ENCODE measurements at regions of chr3 and their contacts with region 1.

Region 1: GRCh38 chr3:123028233-123028828 is 768 bp upstream of the SEMA5B start:
- DNase-seq: peak in 1 of 2 donors; percentile 46
- ATAC-seq: peak; percentile 7 to 62 (median 50)
- H3K4me3 ChIP-seq: peak overlapping the region; percentile 40 to 82 (median 68)
- H3K27ac ChIP-seq: peak overlapping the region in 7 of 10 donors; percentile 8 to 75 (median 53)
- H3K4me1 ChIP-seq: peaks cover 9 to 47% (median 30%) of the 10 kb centered on the region in 9 donors
- H3K27me3 ChIP-seq: peaks cover 0 to 82% (median 17%) of the 10 kb centered on the region in 7 donors
- CTCF ChIP-seq: peak; percentile 29 to 71 (median 55)

Region 2: GRCh38 chr3:122858373-122858772 is 170.0 kb before region 1 on chr3:
- intact Hi-C with region 1: loop called in 4 of 10 experiments (anchors 2 to 10 kb)
- DNase-seq: no peak
- ATAC-seq: no peak
- H3K4me3 ChIP-seq: no peak overlapping the region
- H3K27ac ChIP-seq: no peak overlapping the region
- H3K4me1 ChIP-seq: peaks cover 0 to 3% (median 0%) of the 10 kb centered on the region in 9 donors
- H3K27me3 ChIP-seq: no peaks in the 10 kb centered on the region
- CTCF ChIP-seq: peak in 7 of 9 donors; percentile 16 to 59 (median 50)

Region 3: DNA sequence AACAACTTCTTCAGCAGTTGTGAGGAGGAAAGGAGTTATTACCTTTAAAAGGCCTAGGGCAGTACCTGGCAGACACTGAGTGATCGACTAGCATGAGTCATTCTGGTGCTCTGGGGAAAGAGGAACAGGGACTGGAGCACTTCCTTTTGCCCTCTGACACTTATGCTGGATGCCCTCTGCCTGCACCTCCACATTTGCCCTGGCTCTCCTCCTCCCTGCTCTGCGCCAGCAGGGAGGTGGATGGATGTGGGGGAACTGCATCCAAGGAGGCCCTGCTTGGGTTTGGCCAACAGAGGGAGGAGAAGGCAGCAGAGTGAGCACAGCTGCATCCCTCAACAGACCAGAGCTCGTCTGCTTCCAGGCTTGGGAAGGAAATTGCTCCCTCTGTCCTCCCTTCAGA is 75.8 kb before region 1 on chr3:
- intact Hi-C with region 1: loop called in 3 of 10 experiments (anchors 2 to 5 kb)
- DNase-seq: peak in 1 of 2 donors; percentile 21
- ATAC-seq: peak in 5 of 8 donors; percentile 9 to 50 (median 32)
- H3K4me3 ChIP-seq: no peak overlapping the region
- H3K27ac ChIP-seq: peak overlapping the region in 3 of 10 donors; percentile 17 to 86 (median 53)
- H3K4me1 ChIP-seq: peaks cover 7 to 61% (median 23%) of the 10 kb centered on the region in 9 donors
- H3K27me3 ChIP-seq: no peaks in the 10 kb centered on the region
- CTCF ChIP-seq: peak in 7 of 9 donors; percentile 18 to 50 (median 35)

Region 4: DNA sequence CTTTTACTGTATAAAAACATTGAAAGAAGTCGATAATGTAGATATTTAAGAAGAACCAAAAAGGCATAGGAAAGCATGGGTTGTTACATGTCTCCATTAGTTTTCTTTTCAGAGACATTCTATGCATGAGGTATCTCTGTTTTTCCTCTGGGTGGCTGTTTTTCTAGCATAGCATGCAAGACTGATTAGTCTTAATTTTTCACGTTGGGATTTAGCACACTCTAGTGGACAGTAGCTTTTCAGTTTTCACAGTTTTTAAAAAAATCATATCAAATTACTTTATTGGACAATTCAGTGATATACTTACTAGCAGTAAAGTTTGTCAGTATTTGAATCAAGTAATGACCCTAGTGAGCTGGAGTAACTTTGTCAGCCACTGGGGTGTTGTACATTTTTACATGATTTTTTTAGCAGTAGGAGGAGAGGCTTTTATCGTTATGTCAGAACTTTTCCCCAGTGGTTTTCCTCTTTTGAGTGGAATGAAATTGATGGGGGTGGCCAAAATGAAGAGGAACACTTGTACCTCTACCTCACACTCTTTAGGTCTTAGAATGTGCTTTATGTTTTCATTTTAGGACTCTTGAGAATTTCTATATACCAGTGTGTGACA is 230.6 kb after region 1 on chr3:
- intact Hi-C with region 1: loop called in 6 of 10 experiments (anchors 5 to 10 kb)
- DNase-seq: no peak
- ATAC-seq: peak in 5 of 8 donors; percentile 51 to 76 (median 64)
- H3K4me3 ChIP-seq: no peak overlapping the region
- H3K27ac ChIP-seq: no peak overlapping the region
- H3K4me1 ChIP-seq: peaks cover 0 to 10% (median 0%) of the 10 kb centered on the region in 9 donors
- H3K27me3 ChIP-seq: no peaks in the 10 kb centered on the region
- CTCF ChIP-seq: peak in 8 of 9 donors; percentile 36 to 72 (median 64)

Region 5: GRCh38 chr3:123559040-123559861 is 530.9 kb after region 1 on chr3:
- intact Hi-C with region 1: no loop called
- DNase-seq: no peak
- ATAC-seq: peak in 2 of 8 donors; percentile 48 to 56
- H3K4me3 ChIP-seq: no peak overlapping the region
- H3K27ac ChIP-seq: no peak overlapping the region
- H3K4me1 ChIP-seq: peaks cover 0 to 3% (median 0%) of the 10 kb centered on the region in 9 donors
- H3K27me3 ChIP-seq: no peaks in the 10 kb centered on the region
- CTCF ChIP-seq: peak; percentile 75 to 93 (median 85)

Measured in heart right ventricle (tissue), 16 donors.